ENCODE measurements at regions of chr12 and their contacts with region 1.

Region 1: DNA sequence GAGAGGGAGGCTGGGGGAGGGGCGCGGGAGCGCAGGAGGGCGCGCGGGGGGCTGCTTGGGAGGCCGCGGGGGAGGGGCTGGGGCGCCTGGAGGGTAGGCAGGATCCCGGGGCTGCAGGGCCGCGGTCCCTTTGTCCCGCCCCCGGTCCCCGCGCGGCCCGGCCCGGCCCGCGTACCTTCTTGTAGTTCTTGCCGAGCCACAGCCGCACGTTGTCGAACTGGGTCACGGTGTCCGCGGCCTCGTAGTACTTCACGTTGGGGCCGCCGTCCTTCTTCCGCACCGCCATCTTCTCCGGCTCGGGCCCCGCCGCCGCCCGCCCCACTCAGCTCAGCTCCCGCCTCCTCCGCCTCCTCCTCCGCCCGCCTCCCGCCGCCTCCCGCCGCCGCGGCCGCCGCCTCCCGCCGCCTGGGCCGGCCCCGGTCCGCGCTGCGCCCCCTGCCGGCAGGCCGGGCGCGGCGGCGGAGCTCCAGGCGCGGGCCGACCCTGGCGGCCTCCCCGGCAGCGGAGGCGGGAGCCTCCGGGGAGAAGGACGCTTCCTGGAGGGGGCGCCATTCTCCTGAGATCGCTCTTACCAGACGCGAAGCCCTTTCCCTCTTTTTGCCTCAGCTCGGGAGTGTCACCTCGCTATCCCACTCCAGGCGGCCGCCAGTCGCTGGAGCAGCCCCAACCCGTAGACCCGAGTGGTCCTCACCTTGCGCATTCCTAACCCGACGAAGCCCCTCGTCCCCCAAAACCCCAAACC is at the start of gene SMARCC2:
- DNase-seq: peak; percentile 78 to 84 (median 84)
- H3K4me3 ChIP-seq: peak within 1 kb of the TSS; percentile 63 to 88 (median 83)
- H3K4me3 Mint-ChIP-seq: peak within 1 kb of the TSS; percentile 95 to 96
- H3K27ac ChIP-seq: peak within 1 kb of the TSS; percentile 59 to 75
- H3K27ac Mint-ChIP-seq: peak within 1 kb of the TSS; percentile 87 to 96 (median 92)
- H3K4me1 ChIP-seq: peaks cover 34 to 37% of the 10 kb centered on the region in 2 donors
- H3K4me1 Mint-ChIP-seq: peaks cover 43% of the 10 kb centered on the region
- H3K27me3 ChIP-seq: no peaks in the 10 kb centered on the region
- H3K27me3 Mint-ChIP-seq: no peaks in the 10 kb centered on the region
- CTCF ChIP-seq: peak; percentile 77
- polyA plus RNA-seq, gene SMARCC2: 22.2 to 63.7 (median 43.5) TPM

Region 2: GRCh38 chr12:56078990-56079664 is 110.2 kb before region 1 on chr12:
- intact Hi-C with region 1: no loop called
- DNase-seq: peak; percentile 62 to 66 (median 63)
- H3K4me3 ChIP-seq: peak overlapping the region; percentile 24 to 79 (median 47)
- H3K4me3 Mint-ChIP-seq: peak overlapping the region; percentile 84 to 93
- H3K27ac ChIP-seq: no peak overlapping the region
- H3K27ac Mint-ChIP-seq: peak overlapping the region in 2 of 7 donors; percentile 37 to 63
- H3K4me1 ChIP-seq: peaks cover 20 to 21% of the 10 kb centered on the region in 2 donors
- H3K4me1 Mint-ChIP-seq: peaks cover 19% of the 10 kb centered on the region
- H3K27me3 ChIP-seq: peaks cover 6 to 36% of the 10 kb centered on the region in 2 donors
- H3K27me3 Mint-ChIP-seq: peaks cover 22 to 55% (median 42%) of the 10 kb centered on the region in 3 donors
- CTCF ChIP-seq: peak; percentile 83

Region 3: GRCh38 chr12:56117778-56118687 is 71.3 kb before region 1 on chr12 and contains the start of gene ZC3H10:
- intact Hi-C with region 1: loop called (anchors 2 to 5 kb)
- DNase-seq: peak; percentile 100
- H3K4me3 ChIP-seq: peak within 1 kb of the TSS; percentile 89 to 97 (median 89)
- H3K4me3 Mint-ChIP-seq: peak within 1 kb of the TSS; percentile 95 to 98
- H3K27ac ChIP-seq: peak within 1 kb of the TSS; percentile 92 to 98
- H3K27ac Mint-ChIP-seq: peak within 1 kb of the TSS; percentile 97 to 100 (median 99)
- H3K4me1 ChIP-seq: peaks cover 30 to 35% of the 10 kb centered on the region in 2 donors
- H3K4me1 Mint-ChIP-seq: peaks cover 38% of the 10 kb centered on the region
- H3K27me3 ChIP-seq: no peaks in the 10 kb centered on the region
- H3K27me3 Mint-ChIP-seq: no peaks in the 10 kb centered on the region
- CTCF ChIP-seq: peak; percentile 44
- polyA plus RNA-seq, gene ZC3H10: 1.7 to 3.1 (median 1.8) TPM

Region 4: GRCh38 chr12:56127888-56128669 is 61.3 kb before region 1 on chr12 and contains the start of gene ESYT1:
- intact Hi-C with region 1: loop called (anchors 2 to 5 kb)
- DNase-seq: peak; percentile 99
- H3K4me3 ChIP-seq: peak within 1 kb of the TSS; percentile 60 to 99 (median 94)
- H3K4me3 Mint-ChIP-seq: peak within 1 kb of the TSS; percentile 95 to 98
- H3K27ac ChIP-seq: peak within 1 kb of the TSS; percentile 54 to 78
- H3K27ac Mint-ChIP-seq: peak within 1 kb of the TSS; percentile 84 to 94 (median 93)
- H3K4me1 ChIP-seq: peaks cover 55 to 68% of the 10 kb centered on the region in 2 donors
- H3K4me1 Mint-ChIP-seq: peaks cover 59% of the 10 kb centered on the region
- H3K27me3 ChIP-seq: no peaks in the 10 kb centered on the region
- H3K27me3 Mint-ChIP-seq: peaks cover 0 to 6% (median 1%) of the 10 kb centered on the region in 3 donors
- CTCF ChIP-seq: no peak
- polyA plus RNA-seq, gene ESYT1: 74.2 to 81.1 (median 74.6) TPM

Region 5: GRCh38 chr12:56146492-56147460 is 42.6 kb before region 1 on chr12:
- intact Hi-C with region 1: no loop called
- DNase-seq: no peak
- H3K4me3 ChIP-seq: no peak overlapping the region
- H3K4me3 Mint-ChIP-seq: no peak overlapping the region
- H3K27ac ChIP-seq: no peak overlapping the region
- H3K27ac Mint-ChIP-seq: no peak overlapping the region
- H3K4me1 ChIP-seq: peaks cover 45% of the 10 kb centered on the region in 2 donors
- H3K4me1 Mint-ChIP-seq: peaks cover 43% of the 10 kb centered on the region
- H3K27me3 ChIP-seq: no peaks in the 10 kb centered on the region
- H3K27me3 Mint-ChIP-seq: peaks cover 0 to 2% (median 0%) of the 10 kb centered on the region in 3 donors
- CTCF ChIP-seq: no peak

Region 6: DNA sequence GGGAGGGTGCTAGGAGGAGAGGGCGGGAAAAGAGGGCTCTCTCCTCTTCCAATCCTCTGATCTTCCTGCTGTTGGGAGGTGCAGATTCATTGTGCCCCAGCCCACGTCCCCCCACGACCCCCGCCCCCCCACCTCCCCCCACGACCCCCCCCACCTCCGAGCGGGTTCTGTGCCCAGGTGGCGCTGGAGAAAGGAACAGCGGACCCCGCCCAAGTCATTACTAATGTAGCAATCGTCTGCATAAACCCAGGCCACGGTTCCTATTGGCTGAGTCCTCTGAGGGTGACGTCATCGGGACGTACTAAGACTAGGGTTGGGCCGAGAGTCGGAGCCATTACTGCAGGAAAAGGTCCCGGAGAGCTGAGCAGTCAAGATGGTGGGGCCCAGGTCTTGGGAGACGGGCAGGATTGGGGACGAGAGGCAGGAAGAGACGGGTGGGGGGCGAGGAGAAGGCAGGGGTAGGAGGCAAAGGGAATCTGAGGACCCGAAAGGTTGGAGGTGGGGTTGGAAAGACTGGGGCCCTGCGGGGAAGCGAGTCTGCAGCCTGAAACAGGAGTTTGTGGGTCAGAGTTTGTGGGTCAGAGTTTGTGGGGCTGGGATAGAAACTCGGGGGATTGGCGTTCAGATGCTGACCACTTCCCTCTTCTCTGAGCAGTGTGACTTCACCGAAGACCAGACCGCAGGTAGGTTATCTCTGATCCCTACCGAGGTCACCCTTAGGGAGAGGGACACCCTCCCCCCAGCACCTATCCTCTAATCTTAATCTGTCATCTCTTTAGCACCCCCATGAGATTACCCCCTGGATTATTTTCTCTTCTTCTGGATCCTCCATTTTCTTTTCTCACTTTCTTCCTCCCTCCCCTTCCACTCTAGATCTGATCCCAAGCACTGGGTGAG is 31.1 kb before region 1 on chr12 and contains the start of gene MYL6:
- intact Hi-C with region 1: loop called in 1 of 2 experiments (anchors 2 kb)
- DNase-seq: peak; percentile 94 to 98 (median 97)
- H3K4me3 ChIP-seq: peak within 1 kb of the TSS; percentile 77 to 96 (median 84)
- H3K4me3 Mint-ChIP-seq: peak within 1 kb of the TSS; percentile 97 to 99
- H3K27ac ChIP-seq: peak within 1 kb of the TSS; percentile 90 to 94
- H3K27ac Mint-ChIP-seq: peak within 1 kb of the TSS; percentile 97 to 99 (median 98)
- H3K4me1 ChIP-seq: peaks cover 35 to 44% of the 10 kb centered on the region in 2 donors
- H3K4me1 Mint-ChIP-seq: peaks cover 38% of the 10 kb centered on the region
- H3K27me3 ChIP-seq: no peaks in the 10 kb centered on the region
- H3K27me3 Mint-ChIP-seq: peaks cover 0 to 3% (median 2%) of the 10 kb centered on the region in 3 donors
- CTCF ChIP-seq: no peak
- polyA plus RNA-seq, gene MYL6: 1,962 to 3,939 (median 3,189) TPM

Region 7: GRCh38 chr12:56224102-56224701 is 34.9 kb after region 1 on chr12 and contains the start of gene NABP2:
- intact Hi-C with region 1: loop called in 1 of 2 experiments (anchors 5 kb)
- DNase-seq: peak; percentile 87 to 96 (median 95)
- H3K4me3 ChIP-seq: peak within 1 kb of the TSS; percentile 40 to 96 (median 40)
- H3K4me3 Mint-ChIP-seq: peak within 1 kb of the TSS; percentile 76 to 85
- H3K27ac ChIP-seq: peak within 1 kb of the TSS in 1 of 2 donors; percentile 94
- H3K27ac Mint-ChIP-seq: peak within 1 kb of the TSS; percentile 89 to 99 (median 92)
- H3K4me1 ChIP-seq: peaks cover 44 to 48% of the 10 kb centered on the region in 2 donors
- H3K4me1 Mint-ChIP-seq: peaks cover 42% of the 10 kb centered on the region
- H3K27me3 ChIP-seq: no peaks in the 10 kb centered on the region
- H3K27me3 Mint-ChIP-seq: no peaks in the 10 kb centered on the region
- CTCF ChIP-seq: peak; percentile 90
- polyA plus RNA-seq, gene NABP2: 2.7 to 10.1 (median 3.2) TPM

Region 8: GRCh38 chr12:56258057-56258819 is 68.9 kb after region 1 on chr12 and contains the start of gene ANKRD52:
- intact Hi-C with region 1: loop called in 1 of 2 experiments (anchors 10 kb)
- DNase-seq: peak; percentile 65 to 76 (median 73)
- H3K4me3 ChIP-seq: peak within 1 kb of the TSS; percentile 61 to 94 (median 86)
- H3K4me3 Mint-ChIP-seq: peak within 1 kb of the TSS; percentile 92 to 96
- H3K27ac ChIP-seq: peak within 1 kb of the TSS in 1 of 2 donors; percentile 69
- H3K27ac Mint-ChIP-seq: peak within 1 kb of the TSS; percentile 63 to 90 (median 87)
- H3K4me1 ChIP-seq: peaks cover 17 to 18% of the 10 kb centered on the region in 2 donors
- H3K4me1 Mint-ChIP-seq: peaks cover 18% of the 10 kb centered on the region
- H3K27me3 ChIP-seq: no peaks in the 10 kb centered on the region
- H3K27me3 Mint-ChIP-seq: peaks cover 0 to 2% (median 0%) of the 10 kb centered on the region in 3 donors
- CTCF ChIP-seq: peak; percentile 84
- polyA plus RNA-seq, gene ANKRD52: 1.5 to 12.4 (median 2.4) TPM

Region 9: GRCh38 chr12:56468216-56469006 is 279.1 kb after region 1 on chr12 and contains the start of gene SPRYD4:
- intact Hi-C with region 1: loop called (anchors 10 kb)
- DNase-seq: peak; percentile 94
- H3K4me3 ChIP-seq: peak within 1 kb of the TSS; percentile 89 to 94 (median 92)
- H3K4me3 Mint-ChIP-seq: peak within 1 kb of the TSS; percentile 88 to 96
- H3K27ac ChIP-seq: peak within 1 kb of the TSS; percentile 71 to 93
- H3K27ac Mint-ChIP-seq: peak within 1 kb of the TSS; percentile 89 to 97 (median 94)
- H3K4me1 ChIP-seq: peaks cover 27 to 31% of the 10 kb centered on the region in 2 donors
- H3K4me1 Mint-ChIP-seq: peaks cover 30% of the 10 kb centered on the region
- H3K27me3 ChIP-seq: no peaks in the 10 kb centered on the region
- H3K27me3 Mint-ChIP-seq: peaks cover 0 to 2% (median 0%) of the 10 kb centered on the region in 3 donors
- CTCF ChIP-seq: no peak
- polyA plus RNA-seq, gene SPRYD4: 1.3 to 2.1 (median 1.4) TPM